Naive thymus-derived CD4-positive, alpha-beta T cell (primary cell): ENCODE measurements at regions of chr17 and their contacts with region 1.

Region 1: DNA sequence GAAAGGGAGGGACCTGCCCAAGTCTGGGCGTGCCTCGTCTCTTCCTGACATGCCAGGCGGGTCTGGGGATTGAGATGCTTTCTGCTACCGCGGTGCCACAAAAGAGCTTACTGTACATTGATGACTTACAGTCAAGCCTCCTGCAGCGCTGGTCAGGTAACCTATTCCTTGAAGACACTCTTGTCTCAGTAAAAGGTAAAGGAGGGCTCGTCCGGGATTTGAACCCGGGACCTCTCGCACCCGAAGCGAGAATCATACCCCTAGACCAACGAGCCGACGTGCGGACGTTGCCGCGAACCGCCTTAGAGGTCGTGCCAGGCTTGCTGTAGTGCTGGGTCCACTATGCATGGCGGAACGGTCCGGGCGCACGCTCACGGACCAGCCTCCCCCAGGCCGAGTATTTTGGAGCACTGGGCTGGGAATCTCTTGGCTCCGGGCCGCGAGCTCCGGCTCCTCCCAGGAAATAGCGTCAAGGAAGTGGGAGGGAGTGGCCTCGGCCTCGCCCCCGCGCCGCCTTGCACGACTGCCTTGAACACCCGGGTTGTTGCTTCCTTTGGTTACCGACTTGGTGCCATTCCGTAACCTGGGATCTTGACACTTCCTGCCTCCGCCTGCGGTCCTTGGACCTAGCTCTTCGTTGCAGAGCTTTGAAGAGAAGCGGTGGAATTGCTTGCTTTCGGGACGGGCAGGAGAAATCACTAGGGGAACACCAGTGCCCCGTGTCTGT is 12.4 kb upstream of the AURKB start:
- DNase-seq: peak; percentile 88 to 92 (median 91)
- ATAC-seq: peak; percentile 66
- H3K4me3 ChIP-seq: peak overlapping the region; percentile 99
- H3K4me3 Mint-ChIP-seq: peak overlapping the region; percentile 86 to 99 (median 92)
- H3K27ac ChIP-seq: peak overlapping the region; percentile 83
- H3K27ac Mint-ChIP-seq: peak overlapping the region; percentile 95 to 100 (median 99)
- H3K4me1 ChIP-seq: peaks cover 23 to 26% of the 10 kb centered on the region in 2 donors
- H3K4me1 Mint-ChIP-seq: peaks cover 30 to 81% (median 70%) of the 10 kb centered on the region in 7 donors
- H3K27me3 ChIP-seq: no peaks in the 10 kb centered on the region
- H3K27me3 Mint-ChIP-seq: peaks cover 0 to 17% (median 0%) of the 10 kb centered on the region in 5 donors

Region 2: GRCh38 chr17:7014261-7014994 is 1208.4 kb before region 1 on chr17:
- CTCF ChIA-PET with region 1: no interaction called
- POLR2A ChIA-PET with region 1: no interaction called
- intact Hi-C with region 1: loop called in 1 of 2 experiments (anchors 10 kb)
- DNase-seq: peak; percentile 96 to 98 (median 97)
- ATAC-seq: peak; percentile 89
- H3K4me3 ChIP-seq: peak overlapping the region; percentile 97
- H3K4me3 Mint-ChIP-seq: peak overlapping the region; percentile 85 to 99 (median 97)
- H3K27ac ChIP-seq: peak overlapping the region; percentile 99
- H3K27ac Mint-ChIP-seq: peak overlapping the region; percentile 97 to 100 (median 100)
- H3K4me1 ChIP-seq: peaks cover 31 to 52% of the 10 kb centered on the region in 2 donors
- H3K4me1 Mint-ChIP-seq: peaks cover 30 to 81% (median 63%) of the 10 kb centered on the region in 7 donors
- H3K27me3 ChIP-seq: no peaks in the 10 kb centered on the region
- H3K27me3 Mint-ChIP-seq: no peaks in the 10 kb centered on the region

Region 3: DNA sequence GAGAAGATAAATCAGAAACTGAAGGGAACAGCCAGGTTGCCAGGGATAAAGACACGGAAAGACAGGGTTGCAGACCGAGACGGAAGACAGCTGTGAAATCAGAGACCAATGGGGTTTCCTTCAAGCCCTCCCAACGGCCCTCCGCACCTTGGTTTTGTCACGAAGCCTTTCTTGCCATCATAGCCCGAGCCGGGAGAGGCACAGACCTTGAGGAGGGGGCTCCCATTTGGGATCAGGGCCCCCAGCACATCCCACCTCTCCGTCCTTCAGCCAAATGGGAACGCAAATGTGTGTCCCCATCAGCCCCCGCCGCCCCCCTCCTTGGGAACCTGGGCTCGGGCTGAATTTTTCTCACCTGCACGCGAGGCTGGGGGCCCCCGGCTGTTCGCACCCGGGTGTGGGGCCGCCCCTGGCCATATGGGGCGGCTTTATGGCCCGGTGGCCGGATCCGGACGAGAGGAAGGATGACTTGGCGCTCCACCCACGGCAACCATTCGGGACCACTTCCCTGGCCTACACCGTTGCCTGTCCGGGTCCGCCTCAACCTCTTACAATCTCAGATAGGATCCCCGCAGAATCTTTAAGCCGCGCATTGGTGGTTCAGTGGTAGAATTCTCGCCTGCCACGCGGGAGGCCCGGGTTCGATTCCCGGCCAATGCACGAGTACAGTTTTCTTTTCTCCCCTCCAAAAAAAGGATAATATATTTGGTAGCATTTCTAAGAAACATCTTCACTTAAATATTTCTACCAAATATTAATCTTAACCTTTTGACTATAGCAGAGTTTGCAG is 97.4 kb before region 1 on chr17:
- CTCF ChIA-PET with region 1: interaction called, 14 read pairs
- POLR2A ChIA-PET with region 1: interaction called, 51 read pairs
- intact Hi-C with region 1: loop called in 1 of 2 experiments (anchors 1 kb)
- DNase-seq: peak; percentile 82 to 97 (median 87)
- ATAC-seq: peak; percentile 63
- H3K4me3 ChIP-seq: peak overlapping the region; percentile 96
- H3K4me3 Mint-ChIP-seq: peak overlapping the region; percentile 88 to 99 (median 92)
- H3K27ac ChIP-seq: peak overlapping the region; percentile 50
- H3K27ac Mint-ChIP-seq: peak overlapping the region; percentile 80 to 99 (median 94)
- H3K4me1 ChIP-seq: peaks cover 46 to 50% of the 10 kb centered on the region in 2 donors
- H3K4me1 Mint-ChIP-seq: peaks cover 42 to 57% (median 51%) of the 10 kb centered on the region in 7 donors
- H3K27me3 ChIP-seq: peaks cover 0 to 3% of the 10 kb centered on the region in 2 donors
- H3K27me3 Mint-ChIP-seq: peaks cover 0 to 65% (median 27%) of the 10 kb centered on the region in 5 donors

Region 4: GRCh38 chr17:8163978-8164814 is 58.6 kb before region 1 on chr17:
- CTCF ChIA-PET with region 1: interaction called, 3 read pairs
- POLR2A ChIA-PET with region 1: interaction called, 154 read pairs
- intact Hi-C with region 1: loop called in 1 of 2 experiments (anchors 1 kb)
- DNase-seq: peak; percentile 38 to 80 (median 71)
- ATAC-seq: peak; percentile 68
- H3K4me3 ChIP-seq: peak overlapping the region; percentile 72
- H3K4me3 Mint-ChIP-seq: peak overlapping the region; percentile 78 to 94 (median 85)
- H3K27ac ChIP-seq: peak overlapping the region; percentile 100
- H3K27ac Mint-ChIP-seq: peak overlapping the region in 8 of 9 donors; percentile 94 to 99 (median 98)
- H3K4me1 ChIP-seq: peaks cover 35 to 46% of the 10 kb centered on the region in 2 donors
- H3K4me1 Mint-ChIP-seq: peaks cover 45 to 63% (median 55%) of the 10 kb centered on the region in 7 donors
- H3K27me3 ChIP-seq: peaks cover 0 to 3% of the 10 kb centered on the region in 2 donors
- H3K27me3 Mint-ChIP-seq: no peaks in the 10 kb centered on the region

Region 5: GRCh38 chr17:8209909-8210760 is 12.7 kb before region 1 on chr17 and contains the start of gene AURKB:
- CTCF ChIA-PET with region 1: interaction called, 5 read pairs
- POLR2A ChIA-PET with region 1: interaction called, 110 read pairs
- intact Hi-C with region 1: loop called (anchors 1 kb)
- DNase-seq: peak; percentile 76 to 96 (median 90)
- ATAC-seq: peak; percentile 99
- H3K4me3 ChIP-seq: peak within 1 kb of the TSS; percentile 91
- H3K4me3 Mint-ChIP-seq: peak within 1 kb of the TSS; percentile 85 to 97 (median 93)
- H3K27ac ChIP-seq: peak within 1 kb of the TSS; percentile 81
- H3K27ac Mint-ChIP-seq: peak within 1 kb of the TSS; percentile 60 to 95 (median 86)
- H3K4me1 ChIP-seq: peaks cover 5 to 8% of the 10 kb centered on the region in 2 donors
- H3K4me1 Mint-ChIP-seq: peaks cover 14 to 35% (median 16%) of the 10 kb centered on the region in 7 donors
- H3K27me3 ChIP-seq: no peaks in the 10 kb centered on the region
- H3K27me3 Mint-ChIP-seq: no peaks in the 10 kb centered on the region
- total RNA-seq, gene AURKB: 1.1 to 97.7 (median 1.3) TPM

Region 6: GRCh38 chr17:8294814-8295316 is 72.1 kb after region 1 on chr17:
- CTCF ChIA-PET with region 1: interaction called, 4 read pairs
- POLR2A ChIA-PET with region 1: interaction called, 53 read pairs
- intact Hi-C with region 1: loop called (anchors 1 kb)
- DNase-seq: no peak
- ATAC-seq: no peak
- H3K4me3 ChIP-seq: peak overlapping the region; percentile 96
- H3K4me3 Mint-ChIP-seq: peak overlapping the region; percentile 87 to 97 (median 90)
- H3K27ac ChIP-seq: peak overlapping the region; percentile 86
- H3K27ac Mint-ChIP-seq: peak overlapping the region; percentile 81 to 98 (median 93)
- H3K4me1 ChIP-seq: peaks cover 4 to 13% of the 10 kb centered on the region in 2 donors
- H3K4me1 Mint-ChIP-seq: peaks cover 23 to 45% (median 38%) of the 10 kb centered on the region in 7 donors
- H3K27me3 ChIP-seq: no peaks in the 10 kb centered on the region
- H3K27me3 Mint-ChIP-seq: no peaks in the 10 kb centered on the region

Region 7: DNA sequence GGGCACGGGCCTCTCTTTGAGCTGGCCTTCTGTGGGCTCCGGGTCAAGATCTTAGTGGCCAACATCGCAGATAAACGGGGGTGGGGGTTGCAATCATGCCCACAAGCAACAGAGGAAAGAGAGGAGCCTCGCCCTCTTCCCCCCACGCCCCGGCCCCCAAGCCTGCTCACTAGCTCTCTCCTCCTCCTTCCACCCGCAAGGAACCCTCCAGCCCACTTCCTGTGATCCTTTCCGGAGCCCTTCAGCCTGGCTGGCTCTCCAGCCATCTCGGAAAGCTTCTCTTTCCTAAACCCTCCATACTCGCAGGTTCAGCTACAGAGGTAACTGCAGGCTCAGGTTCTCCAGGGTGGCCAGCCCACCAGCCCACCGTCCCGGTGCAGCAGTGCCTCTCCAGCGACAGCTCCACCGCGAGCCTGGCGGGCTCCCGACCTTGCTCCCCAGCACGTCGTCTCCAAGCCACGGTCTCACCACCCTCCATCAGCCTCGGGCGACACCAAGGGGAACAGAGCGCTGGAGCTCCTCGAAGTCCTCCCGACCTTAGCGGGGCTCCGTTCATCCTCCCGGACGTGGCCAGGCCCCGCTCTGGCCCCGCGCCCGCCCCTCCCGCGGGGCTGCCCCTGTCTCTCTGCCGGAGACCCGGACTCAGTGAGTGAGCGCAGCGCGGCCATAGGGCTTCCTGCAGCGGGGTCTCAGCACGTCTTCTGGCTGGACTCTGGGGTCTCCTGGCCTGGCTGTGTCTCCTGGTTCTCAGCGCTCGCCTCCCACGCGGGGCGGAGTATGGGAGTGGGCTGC is 103.9 kb after region 1 on chr17:
- CTCF ChIA-PET with region 1: no interaction called
- POLR2A ChIA-PET with region 1: no interaction called
- intact Hi-C with region 1: no loop called
- DNase-seq: peak in 7 of 9 donors; percentile 11 to 37 (median 25)
- ATAC-seq: peak; percentile 71
- H3K4me3 ChIP-seq: peak overlapping the region; percentile 10
- H3K4me3 Mint-ChIP-seq: peak overlapping the region; percentile 36 to 83 (median 78)
- H3K27ac ChIP-seq: no peak overlapping the region
- H3K27ac Mint-ChIP-seq: peak overlapping the region in 1 of 9 donors; percentile 13
- H3K4me1 ChIP-seq: peaks cover 4 to 12% of the 10 kb centered on the region in 2 donors
- H3K4me1 Mint-ChIP-seq: peaks cover 11 to 23% (median 16%) of the 10 kb centered on the region in 7 donors
- H3K27me3 ChIP-seq: peaks cover 3 to 9% of the 10 kb centered on the region in 2 donors
- H3K27me3 Mint-ChIP-seq: peaks cover 32 to 47% (median 35%) of the 10 kb centered on the region in 5 donors